Caco-2 (cell line): ENCODE measurements at regions of chr11 and their contacts with region 1.

Region 1: DNA sequence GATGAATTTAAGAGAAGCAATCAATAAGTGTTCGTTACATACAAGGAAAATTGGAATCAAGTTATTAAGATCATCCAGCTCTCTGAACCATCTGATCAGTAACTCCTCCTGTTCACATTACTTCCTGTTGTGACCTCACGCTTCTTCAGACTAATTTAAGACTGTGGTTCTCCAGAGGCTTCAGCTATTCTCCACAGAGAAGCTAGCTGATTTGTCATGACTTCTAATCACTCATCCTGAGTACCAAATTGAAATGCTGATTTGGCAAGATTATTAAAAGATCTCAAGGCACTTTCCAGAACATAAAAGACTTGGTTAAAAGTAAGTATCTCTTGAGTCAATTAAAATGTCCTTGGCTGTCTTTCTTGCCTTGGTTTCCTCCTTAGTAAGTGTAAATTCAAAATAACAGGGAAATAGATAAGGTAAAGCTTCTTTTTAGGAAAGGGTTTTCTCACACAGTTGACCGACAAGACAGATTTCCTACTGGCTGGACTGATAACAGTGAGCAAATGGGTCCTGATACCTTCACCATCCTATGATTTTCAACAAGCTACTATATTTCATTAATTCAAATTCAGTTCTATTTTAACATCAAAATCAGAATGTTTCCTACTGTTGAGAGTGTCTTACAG is 38.5 kb downstream of the GAB2 start:
- DNase-seq: no peak
- H3K4me3 ChIP-seq: no peak overlapping the region
- H3K4me3 Mint-ChIP-seq: peak overlapping the region; percentile 64
- H3K27ac Mint-ChIP-seq: peak overlapping the region; percentile 93
- H3K4me1 ChIP-seq: peaks cover 75% of the 10 kb centered on the region
- H3K4me1 Mint-ChIP-seq: peaks cover 60% of the 10 kb centered on the region
- H3K27me3 ChIP-seq: no peaks in the 10 kb centered on the region
- H3K27me3 Mint-ChIP-seq: no peaks in the 10 kb centered on the region
- CTCF ChIP-seq: no peak

Region 2: DNA sequence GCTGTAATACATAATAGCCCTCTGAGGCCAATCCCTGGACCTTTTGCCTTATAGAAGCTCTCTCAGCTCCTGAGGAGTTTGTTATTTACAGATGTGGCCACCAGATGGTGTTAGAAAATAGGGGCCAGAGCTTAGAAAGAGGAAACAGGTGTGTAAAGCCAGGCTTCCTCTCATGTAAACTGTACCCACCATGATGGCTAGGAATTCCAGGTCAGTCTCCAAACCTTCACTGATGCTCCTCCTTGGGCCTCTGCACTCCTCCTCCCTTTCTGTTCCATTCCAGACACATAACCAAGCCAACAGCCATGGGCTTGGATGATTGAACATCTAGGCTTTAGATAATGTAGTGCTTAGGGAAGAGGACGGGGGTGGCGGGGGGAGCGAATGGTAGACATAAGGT is 150.7 kb before region 1 on chr11:
- CTCF ChIA-PET with region 1: interaction called, 10 read pairs
- POLR2A ChIA-PET with region 1: no interaction called
- intact Hi-C with region 1: no loop called
- DNase-seq: peak; percentile 72 to 81
- H3K4me3 ChIP-seq: no peak overlapping the region
- H3K4me3 Mint-ChIP-seq: no peak overlapping the region
- H3K27ac Mint-ChIP-seq: peak overlapping the region; percentile 24
- H3K4me1 ChIP-seq: no peaks in the 10 kb centered on the region
- H3K4me1 Mint-ChIP-seq: no peaks in the 10 kb centered on the region
- H3K27me3 ChIP-seq: no peaks in the 10 kb centered on the region
- H3K27me3 Mint-ChIP-seq: no peaks in the 10 kb centered on the region
- CTCF ChIP-seq: peak; percentile 79 to 88

Region 3: GRCh38 chr11:78290293-78291176 is 88.6 kb before region 1 on chr11:
- CTCF ChIA-PET with region 1: no interaction called
- POLR2A ChIA-PET with region 1: no interaction called
- intact Hi-C with region 1: loop called (anchors 2 kb)
- DNase-seq: peak in 1 of 2 experiments; percentile 78
- H3K4me3 ChIP-seq: no peak overlapping the region
- H3K4me3 Mint-ChIP-seq: no peak overlapping the region
- H3K27ac Mint-ChIP-seq: peak overlapping the region; percentile 51
- H3K4me1 ChIP-seq: peaks cover 25% of the 10 kb centered on the region
- H3K4me1 Mint-ChIP-seq: peaks cover 38% of the 10 kb centered on the region
- H3K27me3 ChIP-seq: no peaks in the 10 kb centered on the region
- H3K27me3 Mint-ChIP-seq: no peaks in the 10 kb centered on the region
- CTCF ChIP-seq: no peak

Region 4: DNA sequence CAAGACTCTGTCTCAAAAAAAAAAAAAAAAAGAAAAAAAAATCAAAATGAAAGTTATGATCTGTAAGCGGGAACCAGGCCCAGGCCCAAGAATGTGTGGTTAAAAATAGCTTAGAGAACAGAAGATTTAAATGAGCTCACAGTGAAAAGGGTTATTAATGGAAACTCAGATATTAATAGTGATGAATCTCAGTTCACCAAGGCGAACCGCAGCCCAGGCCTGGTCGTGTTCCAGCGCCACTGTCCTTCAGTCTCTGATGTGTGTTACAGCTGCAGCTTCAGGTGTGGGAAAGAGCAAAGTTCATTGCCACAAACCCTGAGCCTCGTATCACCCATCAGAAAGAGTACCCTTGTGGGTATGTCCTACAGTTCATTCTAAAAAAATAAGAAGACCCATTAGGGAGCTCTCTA is 68.7 kb before region 1 on chr11:
- CTCF ChIA-PET with region 1: no interaction called
- POLR2A ChIA-PET with region 1: no interaction called
- intact Hi-C with region 1: no loop called
- DNase-seq: peak in 1 of 2 experiments; percentile 20
- H3K4me3 ChIP-seq: no peak overlapping the region
- H3K4me3 Mint-ChIP-seq: no peak overlapping the region
- H3K27ac Mint-ChIP-seq: no peak overlapping the region
- H3K4me1 ChIP-seq: peaks cover 7% of the 10 kb centered on the region
- H3K4me1 Mint-ChIP-seq: no peaks in the 10 kb centered on the region
- H3K27me3 ChIP-seq: no peaks in the 10 kb centered on the region
- H3K27me3 Mint-ChIP-seq: no peaks in the 10 kb centered on the region
- CTCF ChIP-seq: no peak

Region 5: GRCh38 chr11:78346800-78347199 is 32.4 kb before region 1 on chr11:
- CTCF ChIA-PET with region 1: no interaction called
- POLR2A ChIA-PET with region 1: no interaction called
- intact Hi-C with region 1: no loop called
- DNase-seq: no peak
- H3K4me3 ChIP-seq: no peak overlapping the region
- H3K4me3 Mint-ChIP-seq: no peak overlapping the region
- H3K27ac Mint-ChIP-seq: no peak overlapping the region
- H3K4me1 ChIP-seq: peaks cover 22% of the 10 kb centered on the region
- H3K4me1 Mint-ChIP-seq: peaks cover 54% of the 10 kb centered on the region
- H3K27me3 ChIP-seq: no peaks in the 10 kb centered on the region
- H3K27me3 Mint-ChIP-seq: no peaks in the 10 kb centered on the region
- CTCF ChIP-seq: no peak

Region 6: GRCh38 chr11:78438298-78438975 is 59.3 kb after region 1 on chr11:
- CTCF ChIA-PET with region 1: no interaction called
- POLR2A ChIA-PET with region 1: no interaction called
- intact Hi-C with region 1: no loop called
- DNase-seq: no peak
- H3K4me3 ChIP-seq: no peak overlapping the region
- H3K4me3 Mint-ChIP-seq: no peak overlapping the region
- H3K27ac Mint-ChIP-seq: no peak overlapping the region
- H3K4me1 ChIP-seq: peaks cover 6% of the 10 kb centered on the region
- H3K4me1 Mint-ChIP-seq: peaks cover 7% of the 10 kb centered on the region
- H3K27me3 ChIP-seq: no peaks in the 10 kb centered on the region
- H3K27me3 Mint-ChIP-seq: no peaks in the 10 kb centered on the region
- CTCF ChIP-seq: no peak